Vagina (tissue), 2 donors: ENCODE measurements at regions of chr4 and their contacts with region 1.

Region 1: DNA sequence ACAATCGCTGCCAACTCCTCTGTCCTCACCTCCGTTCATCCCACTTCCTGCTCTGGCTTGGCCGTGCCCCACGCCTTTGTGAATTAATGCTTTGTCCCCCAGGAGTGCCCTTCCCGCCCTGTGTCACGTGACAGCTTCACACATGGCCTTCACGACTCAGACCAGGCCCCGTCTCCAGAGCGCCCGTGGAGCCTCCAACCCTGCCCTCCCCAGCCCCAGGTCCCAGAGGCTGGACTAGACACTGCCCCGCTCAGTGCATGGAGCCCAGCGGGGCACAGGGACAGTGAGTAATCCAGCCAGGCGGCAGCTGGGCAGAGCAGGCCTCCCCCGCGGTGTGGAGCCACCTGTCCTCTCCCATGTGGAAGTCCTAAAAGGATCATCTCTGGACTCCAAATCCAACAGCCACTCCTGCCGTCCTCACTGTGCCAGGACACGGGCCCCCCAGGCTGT is 7.4 kb downstream of the ADRA2C start:
- DNase-seq: no peak
- H3K4me3 ChIP-seq: no peak overlapping the region
- H3K27ac ChIP-seq: no peak overlapping the region
- H3K4me1 ChIP-seq: no peaks in the 10 kb centered on the region
- H3K27me3 ChIP-seq: no peaks in the 10 kb centered on the region
- CTCF ChIP-seq: no peak
- POLR2A ChIP-seq: no peak

Region 2: GRCh38 chr4:3582091-3582475 is 191.5 kb before region 1 on chr4:
- intact Hi-C with region 1: no loop called
- DNase-seq: no peak
- H3K4me3 ChIP-seq: no peak overlapping the region
- H3K27ac ChIP-seq: no peak overlapping the region
- H3K4me1 ChIP-seq: no peaks in the 10 kb centered on the region
- H3K27me3 ChIP-seq: no peaks in the 10 kb centered on the region
- CTCF ChIP-seq: no peak
- POLR2A ChIP-seq: no peak

Region 3: DNA sequence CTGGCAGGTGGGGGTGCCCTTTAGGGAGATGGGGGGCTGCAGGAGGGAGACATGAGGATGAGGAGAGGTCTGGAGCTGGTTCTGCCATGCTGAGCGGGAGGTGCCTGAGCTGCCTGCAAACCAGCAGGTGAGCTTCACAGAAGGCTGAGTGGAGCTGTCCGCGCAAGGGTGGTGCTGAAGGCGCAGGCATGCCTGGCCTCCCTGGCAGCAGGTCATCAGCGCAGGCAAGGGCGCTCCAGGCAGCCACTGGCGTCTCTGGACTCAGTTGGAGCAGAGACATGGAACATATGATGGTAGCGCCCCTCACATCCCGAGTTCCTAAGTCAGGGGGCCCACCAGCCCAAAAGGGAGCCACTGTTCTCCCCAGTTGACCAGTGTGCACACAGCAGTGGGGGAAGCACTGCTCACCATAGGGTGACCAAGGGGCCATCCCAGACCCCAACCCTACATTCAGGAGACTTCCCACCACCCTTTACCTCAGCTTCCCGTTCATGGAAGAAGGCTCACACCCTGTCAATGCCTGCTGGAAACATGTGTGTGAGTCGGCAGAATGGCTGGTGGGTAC is 18.5 kb after region 1 on chr4:
- intact Hi-C with region 1: no loop called
- DNase-seq: no peak
- H3K4me3 ChIP-seq: no peak overlapping the region
- H3K27ac ChIP-seq: no peak overlapping the region
- H3K4me1 ChIP-seq: no peaks in the 10 kb centered on the region
- H3K27me3 ChIP-seq: no peaks in the 10 kb centered on the region
- CTCF ChIP-seq: no peak
- POLR2A ChIP-seq: no peak

Region 4: DNA sequence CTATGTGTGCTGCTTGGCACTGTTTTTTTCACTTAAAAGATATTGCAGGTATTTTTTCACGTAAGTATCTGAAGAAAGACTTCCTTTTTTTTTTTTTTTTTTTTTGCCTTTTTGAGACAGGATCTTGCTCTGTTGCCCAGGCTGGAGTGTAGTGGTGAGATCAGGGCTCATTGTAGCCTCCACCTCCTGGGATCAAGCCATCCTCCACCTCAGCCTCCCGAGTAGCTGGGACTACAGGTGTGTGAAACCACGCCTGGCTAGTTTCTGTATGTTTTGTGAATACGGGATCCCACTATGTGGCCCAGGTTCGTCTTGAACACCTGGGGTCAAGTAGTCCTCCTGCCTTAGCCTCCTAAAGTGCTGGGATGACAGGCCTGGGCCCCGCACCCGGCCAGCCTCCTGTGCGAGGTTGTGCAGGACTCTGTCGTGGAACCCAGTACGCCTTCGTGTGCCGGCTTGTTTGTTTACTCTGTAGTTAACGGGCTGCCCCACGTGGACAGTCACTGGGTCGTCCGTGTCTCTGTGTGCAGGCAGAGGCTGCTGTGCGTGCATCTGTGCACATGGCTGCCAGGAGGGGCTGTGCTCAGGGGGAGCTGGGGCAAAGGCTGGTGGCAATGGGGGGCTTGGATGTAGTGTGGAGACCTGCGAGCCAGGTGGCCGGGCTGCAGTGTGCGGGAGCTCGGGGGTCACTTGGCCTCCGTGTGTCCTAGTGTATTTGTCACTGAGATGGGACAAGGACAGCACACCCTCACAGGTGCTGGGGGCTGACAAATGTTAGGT is 172.1 kb after region 1 on chr4:
- intact Hi-C with region 1: loop called (anchors 10 kb)
- DNase-seq: no peak
- H3K4me3 ChIP-seq: no peak overlapping the region
- H3K27ac ChIP-seq: no peak overlapping the region
- H3K4me1 ChIP-seq: no peaks in the 10 kb centered on the region
- H3K27me3 ChIP-seq: no peaks in the 10 kb centered on the region
- CTCF ChIP-seq: no peak
- POLR2A ChIP-seq: no peak